ENCODE measurements at regions of chr11 and their contacts with region 1.

Region 1: GRCh38 chr11:69750108-69750850 is 24.9 kb downstream of the FGF4 start:
- DNase-seq: no peak
- H3K4me3 ChIP-seq: no peak overlapping the region
- H3K27ac ChIP-seq: no peak overlapping the region
- H3K4me1 ChIP-seq: no peaks in the 10 kb centered on the region
- H3K27me3 ChIP-seq: peaks cover 4% of the 10 kb centered on the region
- CTCF ChIP-seq: no peak

Region 2: DNA sequence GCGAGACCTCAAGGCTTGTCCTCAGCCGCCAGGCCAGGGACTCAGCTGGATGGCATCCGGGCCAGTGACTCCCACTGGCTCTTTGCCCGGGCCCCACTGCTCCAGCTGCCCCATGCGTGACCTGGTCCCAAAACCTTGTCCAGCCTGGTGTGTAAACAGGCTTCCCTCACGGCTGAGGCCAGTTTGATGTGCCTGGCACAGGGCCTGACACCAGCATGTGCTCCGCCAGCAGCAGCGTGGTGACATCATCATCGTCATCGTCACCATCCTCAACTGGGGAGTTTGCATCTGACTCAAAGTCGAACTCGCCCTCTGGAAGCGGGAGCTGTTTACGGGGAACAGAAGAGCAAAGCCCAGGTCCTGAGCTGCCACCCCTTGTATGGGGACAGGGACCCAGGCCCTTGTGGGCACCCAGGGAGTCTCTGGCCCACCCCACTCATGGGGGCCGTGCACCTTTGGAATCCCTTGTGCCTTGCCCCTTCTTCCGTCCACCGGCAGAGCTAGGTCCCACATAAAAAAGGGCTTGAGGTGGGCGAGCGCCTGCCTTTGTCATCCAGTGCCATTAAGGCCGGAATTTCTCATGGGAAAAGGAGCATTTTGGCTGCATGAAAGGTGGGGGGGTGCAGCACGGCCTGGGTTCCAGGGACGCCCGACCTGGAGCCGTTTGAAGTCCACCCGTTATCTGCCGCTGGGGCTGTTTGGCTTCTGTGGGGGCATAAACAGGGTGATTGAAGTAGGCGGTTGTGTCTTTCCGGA is 117.6 kb after region 1 on chr11:
- CTCF ChIA-PET with region 1: no interaction called
- dilution Hi-C with region 1: loop called (anchors 5 kb)
- in situ Hi-C with region 1: no loop called
- intact Hi-C with region 1: no loop called
- DNase-seq: no peak
- H3K4me3 ChIP-seq: no peak overlapping the region
- H3K27ac ChIP-seq: no peak overlapping the region
- H3K4me1 ChIP-seq: no peaks in the 10 kb centered on the region
- H3K27me3 ChIP-seq: no peaks in the 10 kb centered on the region
- CTCF ChIP-seq: no peak